Activated T-helper 1 cell treated with anti-CD3 and anti-CD28 coated beads, Interleukin-12 subunit alpha, Interleukin-12 subunit beta, Interleukin-2, Interleukin-4 antibody, amounts not matched to agents 30 ng/mL and 10 ng/mL and 1 ng/mL, durations not matched to agents 14 hours and 24 hours and 36 hours (primary cell): ENCODE measurements at regions of chr14 and their contacts with region 1.

Region 1: GRCh38 chr14:61103481-61104339 is 122.7 kb downstream of the SLC38A6 start:
- DNase-seq: peak; percentile 25
- H3K4me3 Mint-ChIP-seq: peak overlapping the region; percentile 35
- H3K27ac Mint-ChIP-seq: peak overlapping the region; percentile 82
- H3K4me1 Mint-ChIP-seq: peaks cover 38% of the 10 kb centered on the region
- H3K27me3 Mint-ChIP-seq: no peaks in the 10 kb centered on the region

Region 2: DNA sequence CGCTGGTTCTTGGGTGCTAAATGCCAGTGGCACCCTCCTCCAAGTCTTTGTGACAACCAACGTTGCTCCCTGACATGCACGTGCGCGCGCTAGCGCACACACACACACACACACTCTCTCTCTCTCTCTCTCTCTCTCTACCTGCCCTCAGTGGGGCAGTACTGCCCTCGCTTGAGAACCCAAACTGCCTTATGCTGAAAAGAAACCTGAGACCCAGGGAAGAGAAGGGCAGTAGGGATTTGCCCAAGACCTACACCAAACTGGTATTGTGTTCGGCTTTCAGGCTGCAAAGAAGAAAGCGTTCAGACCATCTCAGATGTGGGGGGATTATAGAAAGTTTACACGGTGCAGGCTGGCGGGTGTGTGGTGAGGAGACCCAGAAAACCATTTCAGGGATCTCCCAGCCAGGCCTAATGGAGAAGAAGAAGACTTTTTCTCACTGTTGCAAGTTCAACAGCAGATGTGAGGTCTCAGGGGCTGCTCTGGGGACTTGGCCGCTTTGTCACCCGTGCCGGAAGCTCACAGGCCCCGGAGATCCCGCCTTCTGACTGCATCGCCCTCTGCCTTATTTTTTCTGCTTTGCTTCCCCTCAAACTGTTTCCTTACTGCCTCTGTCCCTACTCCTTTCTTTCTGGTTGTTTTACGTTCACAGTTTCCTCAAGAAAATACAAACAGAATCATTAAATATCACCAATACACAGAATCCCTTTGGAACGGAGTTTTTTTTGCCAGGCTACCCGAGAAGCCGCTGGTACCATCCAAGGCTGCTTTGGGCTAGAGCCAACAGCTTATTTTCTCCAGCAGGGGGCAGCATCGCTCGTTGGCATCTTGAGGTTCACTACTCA is 772.3 kb before region 1 on chr14:
- intact Hi-C with region 1: loop called (anchors 5 kb)
- DNase-seq: peak; percentile 60
- H3K4me3 Mint-ChIP-seq: peak overlapping the region; percentile 92
- H3K27ac Mint-ChIP-seq: peak overlapping the region; percentile 94
- H3K4me1 Mint-ChIP-seq: peaks cover 45% of the 10 kb centered on the region
- H3K27me3 Mint-ChIP-seq: peaks cover 37% of the 10 kb centered on the region

Region 3: DNA sequence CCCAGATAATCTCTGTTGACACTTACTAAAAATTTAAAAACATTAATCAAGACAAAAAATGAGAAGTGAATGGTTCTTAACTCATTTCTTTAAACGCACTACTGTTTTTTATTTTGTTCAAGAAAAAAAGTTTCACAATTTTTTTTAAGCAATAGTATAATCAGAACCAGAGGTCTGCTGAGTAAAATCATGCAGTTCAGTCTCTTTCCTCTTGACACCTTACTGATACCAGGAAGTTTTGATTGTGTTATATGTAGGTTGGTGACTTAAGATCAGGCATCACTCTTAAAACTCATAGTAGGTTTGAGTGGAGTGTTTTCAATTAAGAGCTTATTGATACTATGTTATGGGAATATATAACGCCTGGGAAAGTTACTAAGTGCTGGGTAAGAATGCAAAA is 244.2 kb before region 1 on chr14:
- intact Hi-C with region 1: loop called (anchors 2 kb)
- DNase-seq: no peak
- H3K4me3 Mint-ChIP-seq: no peak overlapping the region
- H3K27ac Mint-ChIP-seq: no peak overlapping the region
- H3K4me1 Mint-ChIP-seq: peaks cover 28% of the 10 kb centered on the region
- H3K27me3 Mint-ChIP-seq: peaks cover 2% of the 10 kb centered on the region

Region 4: DNA sequence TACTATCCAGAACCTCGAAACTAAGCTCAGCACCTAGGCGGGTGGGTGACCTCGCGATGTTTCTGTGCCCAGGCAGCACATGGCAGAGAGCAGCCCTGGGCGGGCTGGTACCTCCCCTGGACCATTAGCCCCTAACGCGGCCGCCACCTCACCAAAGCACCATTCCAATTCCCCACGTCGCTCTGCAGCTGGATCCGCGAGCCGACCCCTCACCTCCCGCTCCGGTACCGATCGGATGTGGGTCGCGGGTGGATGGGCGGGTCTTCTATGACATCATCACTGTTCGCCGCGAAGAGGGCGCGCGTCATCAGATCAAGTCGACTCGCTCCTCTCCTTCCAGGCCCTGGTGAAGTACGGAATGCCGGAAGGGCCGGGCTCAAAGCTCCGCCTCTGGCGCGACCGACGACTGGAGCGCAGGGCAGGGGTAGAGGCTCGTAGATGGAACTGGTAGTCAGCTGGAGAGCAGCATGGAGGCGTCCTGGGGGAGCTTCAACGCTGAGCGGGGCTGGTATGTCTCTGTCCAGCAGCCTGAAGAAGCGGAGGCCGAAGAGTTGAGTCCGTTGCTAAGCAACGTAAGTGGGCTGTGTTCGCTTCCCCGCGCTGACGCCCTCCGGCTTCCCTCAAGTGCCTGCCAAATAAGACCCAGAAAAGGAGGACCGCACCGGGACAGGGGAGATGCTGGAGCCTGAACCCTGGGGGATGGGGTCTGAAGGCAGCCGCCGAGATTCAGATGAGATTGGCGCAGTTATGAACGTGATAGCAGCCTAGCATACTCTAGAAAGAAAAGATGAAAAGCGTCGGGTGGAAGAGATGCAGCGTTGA is 122.7 kb before region 1 on chr14 and contains the starts of genes SLC38A6 and TRMT5:
- intact Hi-C with region 1: loop called (anchors 2 kb)
- DNase-seq: peak; percentile 88
- H3K4me3 Mint-ChIP-seq: no peak within 1 kb of the TSS
- H3K27ac Mint-ChIP-seq: no peak within 1 kb of the TSS
- H3K4me1 Mint-ChIP-seq: peaks cover 17% of the 10 kb centered on the region
- H3K27me3 Mint-ChIP-seq: no peaks in the 10 kb centered on the region
- total RNA-seq, gene SLC38A6: 4.5 and 4.7 TPM in 2 replicates
- total RNA-seq, gene TRMT5: 17.4 and 19.2 TPM in 2 replicates

Region 5: GRCh38 chr14:61064210-61064609 is 39.5 kb before region 1 on chr14:
- intact Hi-C with region 1: no loop called
- DNase-seq: no peak
- H3K4me3 Mint-ChIP-seq: no peak overlapping the region
- H3K27ac Mint-ChIP-seq: no peak overlapping the region
- H3K4me1 Mint-ChIP-seq: no peaks in the 10 kb centered on the region
- H3K27me3 Mint-ChIP-seq: peaks cover 1% of the 10 kb centered on the region

Region 6: DNA sequence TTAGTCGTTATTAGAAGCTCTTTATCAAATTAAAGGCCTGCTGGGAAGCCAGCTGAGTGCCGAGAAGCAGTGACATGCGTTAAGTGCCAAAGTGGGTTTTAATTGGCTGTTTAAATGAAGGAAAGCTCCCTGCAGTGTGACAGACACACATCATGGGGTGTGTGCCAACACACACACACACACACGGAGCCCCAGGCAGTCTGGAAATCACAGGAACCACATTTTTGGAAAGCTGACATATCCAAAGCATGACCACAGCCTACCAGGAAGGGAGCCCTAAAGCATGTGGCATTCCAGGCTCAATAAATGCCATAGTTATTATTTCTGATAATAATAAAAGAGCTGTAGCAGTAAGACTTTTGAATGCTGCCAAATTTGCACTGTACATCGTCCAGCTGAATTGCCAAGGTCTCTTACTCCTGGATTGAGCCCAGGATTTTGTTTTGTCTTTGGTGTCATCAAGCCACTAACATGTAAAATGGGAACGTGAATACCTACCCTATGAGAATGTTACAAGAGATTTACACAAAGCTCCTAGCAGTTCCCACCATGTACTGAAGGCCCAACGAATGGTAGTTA is 42.3 kb after region 1 on chr14:
- intact Hi-C with region 1: loop called (anchors 1 kb)
- DNase-seq: no peak
- H3K4me3 Mint-ChIP-seq: no peak overlapping the region
- H3K27ac Mint-ChIP-seq: no peak overlapping the region
- H3K4me1 Mint-ChIP-seq: no peaks in the 10 kb centered on the region
- H3K27me3 Mint-ChIP-seq: no peaks in the 10 kb centered on the region

Region 7: GRCh38 chr14:61178226-61179060 is 74.7 kb after region 1 on chr14:
- intact Hi-C with region 1: loop called (anchors 1 kb)
- DNase-seq: peak; percentile 27
- H3K4me3 Mint-ChIP-seq: peak overlapping the region; percentile 47
- H3K27ac Mint-ChIP-seq: peak overlapping the region; percentile 78
- H3K4me1 Mint-ChIP-seq: peaks cover 44% of the 10 kb centered on the region
- H3K27me3 Mint-ChIP-seq: peaks cover 2% of the 10 kb centered on the region

Region 8: GRCh38 chr14:61252369-61253063 is 148.8 kb after region 1 on chr14:
- intact Hi-C with region 1: loop called (anchors 1 kb)
- DNase-seq: peak; percentile 49
- H3K4me3 Mint-ChIP-seq: no peak overlapping the region
- H3K27ac Mint-ChIP-seq: no peak overlapping the region
- H3K4me1 Mint-ChIP-seq: peaks cover 24% of the 10 kb centered on the region
- H3K27me3 Mint-ChIP-seq: peaks cover 24% of the 10 kb centered on the region

Region 9: DNA sequence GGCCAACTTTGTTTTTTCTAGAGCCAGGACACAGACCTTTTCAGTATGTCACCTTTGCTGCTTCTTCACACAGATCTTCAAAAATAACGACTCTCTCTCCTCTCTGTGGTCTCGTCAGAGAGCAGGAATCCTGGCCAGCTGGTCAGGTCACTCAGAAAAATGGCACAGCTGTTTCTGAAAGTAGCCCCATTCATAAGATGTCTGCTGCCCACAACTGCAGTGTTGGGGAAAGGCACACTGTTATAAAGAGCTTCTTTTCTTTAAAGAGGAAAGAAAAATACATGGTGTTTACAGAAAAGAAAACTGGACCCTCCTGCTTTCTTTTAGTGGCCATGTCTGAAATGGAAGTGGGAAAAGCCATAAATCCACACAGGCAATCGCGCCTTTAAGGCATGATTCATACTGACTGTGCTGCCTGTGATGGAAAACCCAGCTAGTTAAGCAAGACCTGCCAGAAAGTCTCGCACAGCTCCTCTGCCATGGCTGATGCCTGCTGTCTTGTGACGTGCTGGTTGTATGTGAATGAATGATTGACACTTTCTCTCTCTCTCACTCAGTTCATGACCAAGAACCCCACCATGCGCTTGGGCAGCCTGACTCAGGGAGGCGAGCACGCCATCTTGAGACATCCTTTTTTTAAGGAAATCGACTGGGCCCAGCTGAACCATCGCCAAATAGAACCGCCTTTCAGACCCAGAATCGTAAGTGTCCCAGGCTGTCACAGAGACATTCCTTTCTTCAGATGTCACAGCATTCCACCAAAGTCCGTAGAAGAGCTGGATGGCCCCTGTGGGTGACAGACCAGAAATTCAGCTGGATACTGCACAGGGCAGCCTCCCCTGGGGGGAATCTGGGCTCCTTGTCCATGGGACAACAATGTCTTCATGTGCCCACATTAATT is 443.7 kb after region 1 on chr14:
- intact Hi-C with region 1: no loop called
- DNase-seq: no peak
- H3K4me3 Mint-ChIP-seq: no peak overlapping the region
- H3K27ac Mint-ChIP-seq: no peak overlapping the region
- H3K4me1 Mint-ChIP-seq: peaks cover 54% of the 10 kb centered on the region
- H3K27me3 Mint-ChIP-seq: no peaks in the 10 kb centered on the region